GM18951 (cell line): ENCODE measurements at regions of chr14 and their contacts with region 1.

Region 1: DNA sequence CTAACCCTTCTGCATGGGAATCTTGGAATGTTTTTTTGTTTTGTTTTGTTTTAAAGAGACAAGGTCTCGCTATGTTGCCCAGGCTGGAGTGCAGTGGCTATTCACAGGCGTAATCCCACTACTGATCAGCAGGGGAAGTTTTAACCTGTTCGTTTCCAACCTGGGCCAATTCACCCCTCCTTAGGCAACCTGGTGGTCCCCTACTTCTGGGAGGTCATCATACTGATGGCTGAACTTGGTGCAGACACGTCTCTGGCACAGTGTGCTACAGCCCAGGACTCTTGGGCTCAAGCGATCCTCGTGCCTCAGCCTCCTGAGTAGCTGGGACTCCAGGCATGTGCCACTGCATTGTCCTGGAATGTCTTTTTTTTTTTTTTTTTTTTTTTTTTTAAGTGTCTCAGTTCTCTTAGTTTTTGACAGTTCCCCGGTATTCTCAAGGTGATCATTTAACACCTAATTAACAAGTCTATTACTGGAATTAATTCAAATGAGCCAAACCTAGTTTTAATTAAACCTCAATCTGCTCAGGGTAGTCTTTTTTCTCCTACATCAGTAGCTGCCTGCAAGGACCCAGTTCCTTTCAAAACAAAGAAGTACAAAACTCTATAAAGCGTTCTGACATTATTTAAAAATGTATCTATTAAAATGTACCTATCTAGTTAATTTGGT is 49.0 kb upstream of the ISM2 start:
- POLR2A ChIP-seq: no peak

Region 2: DNA sequence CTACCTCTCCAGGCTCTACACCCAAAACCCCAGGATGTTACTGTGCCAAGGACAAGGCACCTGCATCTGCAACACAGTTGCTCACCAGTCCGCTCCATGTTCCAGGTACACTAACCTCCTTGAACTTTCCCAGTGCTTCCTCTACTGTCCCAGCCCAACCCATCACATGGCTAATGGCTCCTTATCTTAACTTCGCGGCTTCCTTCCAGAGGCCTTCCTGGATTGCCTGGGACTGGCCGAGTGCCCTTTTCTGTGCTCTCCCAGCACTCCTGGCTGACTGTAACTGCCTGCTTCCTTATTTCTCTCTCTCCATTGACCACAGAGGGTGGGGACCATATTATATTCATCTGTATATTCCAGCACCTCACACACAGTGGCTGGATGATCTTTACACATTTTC is 247.9 kb before region 1 on chr14:
- in situ Hi-C with region 1: loop called (anchors 5 kb)
- POLR2A ChIP-seq: no peak

Region 3: GRCh38 chr14:77903221-77903620 is 355.6 kb after region 1 on chr14:
- in situ Hi-C with region 1: no loop called
- POLR2A ChIP-seq: no peak